Activated B cell treated with CpG ODN at 0.5 μM for 24 hours (primary cell): ENCODE measurements at regions of chr9 and their contacts with region 1.

Region 1: GRCh38 chr9:133459476-133460404 is at the start of gene CACFD1:
- DNase-seq: peak; percentile 97
- ATAC-seq: peak; percentile 77
- H3K4me3 Mint-ChIP-seq: peak within 1 kb of the TSS; percentile 90
- H3K27ac Mint-ChIP-seq: peak within 1 kb of the TSS; percentile 89
- H3K4me1 Mint-ChIP-seq: peaks cover 20% of the 10 kb centered on the region
- H3K27me3 Mint-ChIP-seq: no peaks in the 10 kb centered on the region
- CTCF ChIP-seq: no peak
- total RNA-seq, gene CACFD1: 13.8 and 15.0 TPM in 2 replicates

Region 2: DNA sequence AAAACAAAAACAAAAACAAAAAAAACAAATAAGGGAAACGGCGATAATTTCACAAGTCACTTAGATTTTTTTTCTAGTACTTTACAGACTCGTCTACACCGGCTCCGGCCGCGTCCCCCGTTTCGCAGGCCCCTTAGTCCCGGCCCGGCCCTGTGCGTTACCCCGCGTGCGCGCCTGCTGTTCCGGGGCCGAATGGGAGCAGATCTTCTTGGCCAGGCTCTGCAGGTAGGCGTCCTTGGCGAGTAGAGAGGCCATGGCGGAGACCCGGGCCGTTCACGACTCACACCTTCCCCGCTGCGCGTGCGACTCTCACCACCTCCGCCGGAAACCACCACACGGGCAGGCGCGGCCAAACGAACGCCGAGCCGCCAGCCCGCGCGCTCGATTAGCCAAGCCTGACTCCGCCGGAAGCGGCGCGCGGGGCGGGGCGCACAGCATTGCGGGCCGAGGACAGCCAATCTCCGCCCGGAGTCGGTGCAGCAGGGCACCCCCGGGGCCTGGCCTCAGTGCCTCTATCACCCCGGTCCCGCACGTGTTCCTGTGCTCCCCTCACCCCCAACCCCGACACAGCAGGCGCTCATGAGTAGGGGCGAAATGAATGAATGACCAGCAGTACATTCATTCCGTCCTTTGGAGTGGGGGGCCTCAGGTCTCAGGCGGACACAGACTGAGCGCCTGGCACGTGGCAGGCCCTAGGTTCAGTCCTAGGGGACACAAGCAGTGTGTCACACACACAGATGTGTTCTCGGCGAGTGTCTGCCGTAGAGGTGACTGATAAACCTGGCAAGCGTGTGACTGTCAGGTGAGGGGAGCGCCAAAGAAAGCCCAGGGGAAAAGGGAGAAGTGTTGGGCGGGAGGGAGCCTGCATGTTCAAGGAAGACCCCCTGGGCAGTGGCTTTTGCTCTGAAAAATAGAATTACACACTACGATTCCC is 123.6 kb before region 1 on chr9 and contains the start of gene SURF6:
- CTCF ChIA-PET with region 1: no interaction called
- POLR2A ChIA-PET with region 1: no interaction called
- intact Hi-C with region 1: loop called (anchors 1 kb)
- DNase-seq: peak; percentile 94
- ATAC-seq: peak; percentile 93
- H3K4me3 Mint-ChIP-seq: peak within 1 kb of the TSS; percentile 97
- H3K27ac Mint-ChIP-seq: peak within 1 kb of the TSS; percentile 92
- H3K4me1 Mint-ChIP-seq: peaks cover 57% of the 10 kb centered on the region
- H3K27me3 Mint-ChIP-seq: no peaks in the 10 kb centered on the region
- CTCF ChIP-seq: no peak
- total RNA-seq, gene SURF6: 22.4 and 23.9 TPM in 2 replicates

Region 3: GRCh38 chr9:133356391-133357091 is 103.2 kb before region 1 on chr9 and contains the starts of genes SURF1 and SURF2:
- CTCF ChIA-PET with region 1: no interaction called
- POLR2A ChIA-PET with region 1: interaction called, 12 read pairs
- intact Hi-C with region 1: no loop called
- DNase-seq: peak; percentile 87
- ATAC-seq: peak; percentile 92
- H3K4me3 Mint-ChIP-seq: peak within 1 kb of the TSS; percentile 88
- H3K27ac Mint-ChIP-seq: peak within 1 kb of the TSS; percentile 82
- H3K4me1 Mint-ChIP-seq: peaks cover 43% of the 10 kb centered on the region
- H3K27me3 Mint-ChIP-seq: no peaks in the 10 kb centered on the region
- CTCF ChIP-seq: no peak
- total RNA-seq, gene SURF1: 33.6 and 38.9 TPM in 2 replicates
- total RNA-seq, gene SURF2: 17.3 and 17.8 TPM in 2 replicates

Region 4: DNA sequence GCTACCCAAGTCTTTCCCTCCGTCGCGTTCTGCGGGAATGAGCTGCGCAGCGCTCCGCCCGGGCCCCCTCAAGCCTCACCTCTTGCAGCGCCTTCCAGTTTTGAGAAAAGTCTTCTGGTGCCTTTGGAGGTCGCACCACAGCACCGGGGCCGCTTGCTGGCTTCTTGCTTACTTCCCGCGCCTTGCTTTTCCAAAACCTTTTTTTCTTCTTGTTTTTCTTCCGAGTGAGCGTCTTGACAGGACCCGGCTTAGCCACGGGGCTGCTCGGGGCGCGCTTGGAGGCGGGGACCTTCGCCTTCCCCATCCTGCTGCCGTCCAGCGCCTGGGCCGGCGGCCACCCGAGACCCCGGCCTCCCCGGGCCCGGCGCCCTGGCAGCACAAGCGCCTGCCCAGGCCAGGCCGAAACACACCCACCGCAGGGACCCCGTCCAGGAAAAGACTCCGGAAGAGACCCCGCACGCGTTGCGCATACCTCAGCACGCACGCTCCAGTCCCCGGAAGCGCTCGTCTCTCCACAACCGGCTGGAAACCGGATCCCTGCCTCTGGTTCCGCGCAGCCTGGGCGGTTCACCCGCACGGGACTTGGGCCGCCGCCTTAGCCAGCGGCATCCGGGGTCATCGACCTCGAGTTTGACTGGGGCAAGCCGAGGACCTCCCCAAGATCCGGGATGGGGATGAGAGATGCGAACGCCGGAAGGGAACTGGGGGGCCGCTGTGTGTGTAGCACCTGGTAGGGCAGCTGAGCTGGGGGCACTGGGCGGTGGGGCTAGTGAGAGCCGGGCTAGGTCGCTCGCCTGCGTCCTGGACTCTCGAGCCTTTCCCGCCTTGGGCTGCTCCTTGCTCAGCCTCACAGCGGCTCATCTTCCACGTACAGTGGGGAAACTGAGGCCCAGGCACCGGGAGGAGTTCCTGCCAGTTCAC is 41.9 kb before region 1 on chr9 and contains the start of gene REXO4:
- CTCF ChIA-PET with region 1: no interaction called
- POLR2A ChIA-PET with region 1: interaction called, 12 read pairs
- intact Hi-C with region 1: loop called (anchors 1 kb)
- DNase-seq: peak; percentile 86
- ATAC-seq: peak; percentile 84
- H3K4me3 Mint-ChIP-seq: peak within 1 kb of the TSS; percentile 90
- H3K27ac Mint-ChIP-seq: peak within 1 kb of the TSS; percentile 91
- H3K4me1 Mint-ChIP-seq: peaks cover 71% of the 10 kb centered on the region
- H3K27me3 Mint-ChIP-seq: no peaks in the 10 kb centered on the region
- CTCF ChIP-seq: no peak
- total RNA-seq, gene REXO4: 31.6 and 33.3 TPM in 2 replicates

Region 5: DNA sequence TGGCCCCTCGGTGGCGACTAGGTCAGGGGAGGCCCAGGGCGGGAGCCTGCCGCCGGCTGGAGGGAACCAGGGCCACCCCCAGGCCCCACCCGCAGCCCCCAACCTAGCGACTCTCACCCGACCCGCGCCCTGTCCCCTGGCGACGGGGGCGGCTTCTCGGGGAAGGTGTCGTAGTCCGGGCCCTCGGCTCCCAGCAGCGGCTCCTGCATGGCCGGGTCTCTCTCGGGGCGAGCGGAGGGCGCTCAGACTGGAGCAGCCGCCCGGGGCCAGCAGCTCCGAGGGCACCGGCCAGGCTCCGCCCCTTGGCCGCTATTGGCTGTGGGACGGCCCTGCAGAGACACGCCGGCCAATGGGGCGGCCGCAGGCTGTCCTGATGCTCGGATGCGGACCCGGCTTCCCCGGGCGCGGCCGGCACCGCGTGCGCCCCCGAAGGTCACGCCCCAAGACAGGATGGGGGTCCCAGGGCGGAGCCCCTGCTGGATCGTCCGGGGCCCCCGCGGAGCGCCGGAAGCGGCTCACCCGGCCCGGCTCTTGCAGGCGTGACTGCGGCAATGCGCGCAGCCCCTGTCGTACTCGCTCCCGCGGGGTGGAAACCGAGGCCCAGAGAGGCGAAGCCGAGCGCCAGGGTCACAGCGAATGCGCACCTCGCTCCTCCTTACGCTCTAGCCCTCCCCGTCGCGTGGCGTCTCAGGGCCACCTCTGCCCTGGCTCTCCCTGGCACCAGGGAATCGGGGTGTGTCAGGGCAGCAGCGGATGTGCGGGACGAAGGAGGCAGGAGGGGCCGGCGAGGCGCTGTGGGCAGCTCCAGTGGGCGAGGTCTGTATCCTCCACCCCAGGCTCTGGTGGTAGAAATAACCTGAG is 19.3 kb after region 1 on chr9 and contains the start of gene SLC2A6:
- CTCF ChIA-PET with region 1: no interaction called
- POLR2A ChIA-PET with region 1: interaction called, 44 read pairs
- intact Hi-C with region 1: loop called (anchors 1 kb)
- DNase-seq: peak; percentile 85
- ATAC-seq: peak; percentile 93
- H3K4me3 Mint-ChIP-seq: peak within 1 kb of the TSS; percentile 90
- H3K27ac Mint-ChIP-seq: peak within 1 kb of the TSS; percentile 90
- H3K4me1 Mint-ChIP-seq: peaks cover 29% of the 10 kb centered on the region
- H3K27me3 Mint-ChIP-seq: no peaks in the 10 kb centered on the region
- CTCF ChIP-seq: no peak
- total RNA-seq, gene SLC2A6: 32.9 and 37.4 TPM in 2 replicates

Region 6: DNA sequence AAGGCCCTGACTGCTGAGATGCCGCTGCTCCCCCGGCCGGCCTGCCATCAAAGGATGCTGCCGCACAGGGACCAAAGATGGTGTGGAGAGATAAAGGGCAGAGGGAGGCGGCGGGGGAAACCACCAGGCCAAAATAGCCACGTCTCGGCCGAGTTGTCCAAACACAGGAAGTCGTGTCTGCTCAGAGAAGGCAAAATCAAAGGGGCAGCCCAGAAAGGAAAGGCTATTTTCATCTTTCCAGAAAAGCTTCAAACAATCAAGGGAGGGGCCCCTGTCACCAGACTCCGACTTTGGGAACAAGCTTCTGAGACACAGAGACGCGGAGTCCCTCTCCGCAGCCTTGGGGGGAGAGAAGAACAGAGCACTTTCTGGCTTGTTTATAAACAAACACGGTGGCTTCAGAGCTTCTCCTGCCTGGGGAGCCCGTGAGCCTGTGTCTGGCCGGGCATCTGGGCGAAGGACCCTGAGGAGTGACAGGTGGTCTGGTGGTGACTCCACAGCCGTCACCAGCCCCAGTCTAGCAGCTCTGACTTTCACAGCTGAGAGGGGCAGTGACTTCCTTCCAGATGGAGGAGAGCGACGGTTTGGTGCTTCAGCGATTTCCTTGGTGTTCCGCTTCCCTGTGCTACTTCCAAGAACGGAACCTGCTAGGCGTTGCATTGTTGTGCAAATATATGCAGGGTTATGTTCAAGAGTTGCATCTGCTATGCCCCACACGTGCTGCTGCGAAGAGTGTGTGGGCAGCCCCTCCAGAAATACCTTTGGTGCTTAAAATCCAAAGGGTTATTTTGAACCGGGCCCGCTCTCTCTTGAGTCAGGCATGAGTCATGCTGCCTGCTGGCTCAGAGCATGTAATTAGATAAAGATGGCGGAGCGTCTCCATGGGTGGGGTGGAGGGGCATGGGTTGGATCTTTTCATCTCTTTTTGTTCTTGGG is 98.7 kb after region 1 on chr9:
- CTCF ChIA-PET with region 1: no interaction called
- POLR2A ChIA-PET with region 1: no interaction called
- intact Hi-C with region 1: no loop called
- DNase-seq: no peak
- ATAC-seq: peak; percentile 67
- H3K4me3 Mint-ChIP-seq: peak overlapping the region; percentile 61
- H3K27ac Mint-ChIP-seq: peak overlapping the region; percentile 47
- H3K4me1 Mint-ChIP-seq: peaks cover 25% of the 10 kb centered on the region
- H3K27me3 Mint-ChIP-seq: peaks cover 15% of the 10 kb centered on the region
- CTCF ChIP-seq: no peak

Region 7: GRCh38 chr9:133737774-133738639 is 278.3 kb after region 1 on chr9 and contains the start of gene SARDH:
- CTCF ChIA-PET with region 1: no interaction called
- POLR2A ChIA-PET with region 1: no interaction called
- intact Hi-C with region 1: no loop called
- DNase-seq: peak; percentile 49
- ATAC-seq: peak; percentile 46
- H3K4me3 Mint-ChIP-seq: peak within 1 kb of the TSS; percentile 65
- H3K27ac Mint-ChIP-seq: no peak within 1 kb of the TSS
- H3K4me1 Mint-ChIP-seq: peaks cover 36% of the 10 kb centered on the region
- H3K27me3 Mint-ChIP-seq: peaks cover 8% of the 10 kb centered on the region
- CTCF ChIP-seq: no peak
- total RNA-seq, gene SARDH: not detected in 2 replicates